Sciatic nerve (tissue), 2 donors: ENCODE measurements at regions of chr16 and their contacts with region 1.

Region 1: GRCh38 chr16:17561056-17561455 is 90.3 kb upstream of the XYLT1 start:
- DNase-seq: no peak
- ATAC-seq: no peak

Region 2: DNA sequence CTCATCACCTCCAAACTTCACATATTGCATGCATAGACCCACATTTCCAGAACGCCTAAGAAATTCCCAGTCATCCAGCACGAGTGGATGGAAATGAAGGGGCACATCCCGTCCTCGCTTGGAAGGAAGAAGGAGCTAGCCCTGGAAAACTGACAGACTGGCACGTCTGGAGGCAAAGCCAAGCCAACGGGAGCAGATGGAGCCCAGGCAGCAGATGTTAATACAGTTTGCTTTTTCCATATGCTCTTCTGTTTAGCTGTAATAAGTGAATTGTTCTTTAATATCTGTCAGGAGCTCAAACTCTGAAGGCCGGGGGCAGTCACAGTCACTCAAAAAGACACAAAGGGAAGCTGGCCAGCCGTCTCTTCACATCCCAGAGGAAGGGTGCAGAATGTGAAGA is 278.0 kb before region 1 on chr16:
- intact Hi-C with region 1: loop called (anchors 2 kb)
- DNase-seq: no peak
- ATAC-seq: no peak

Region 3: GRCh38 chr16:17544785-17545184 is 16.3 kb before region 1 on chr16:
- intact Hi-C with region 1: no loop called
- DNase-seq: no peak
- ATAC-seq: no peak